Activated CD4-positive, alpha-beta T cell treated with anti-CD3 and anti-CD28 coated beads for 36 hours (primary cell): ENCODE measurements at regions of chr19 and their contacts with region 1.

Region 1: DNA sequence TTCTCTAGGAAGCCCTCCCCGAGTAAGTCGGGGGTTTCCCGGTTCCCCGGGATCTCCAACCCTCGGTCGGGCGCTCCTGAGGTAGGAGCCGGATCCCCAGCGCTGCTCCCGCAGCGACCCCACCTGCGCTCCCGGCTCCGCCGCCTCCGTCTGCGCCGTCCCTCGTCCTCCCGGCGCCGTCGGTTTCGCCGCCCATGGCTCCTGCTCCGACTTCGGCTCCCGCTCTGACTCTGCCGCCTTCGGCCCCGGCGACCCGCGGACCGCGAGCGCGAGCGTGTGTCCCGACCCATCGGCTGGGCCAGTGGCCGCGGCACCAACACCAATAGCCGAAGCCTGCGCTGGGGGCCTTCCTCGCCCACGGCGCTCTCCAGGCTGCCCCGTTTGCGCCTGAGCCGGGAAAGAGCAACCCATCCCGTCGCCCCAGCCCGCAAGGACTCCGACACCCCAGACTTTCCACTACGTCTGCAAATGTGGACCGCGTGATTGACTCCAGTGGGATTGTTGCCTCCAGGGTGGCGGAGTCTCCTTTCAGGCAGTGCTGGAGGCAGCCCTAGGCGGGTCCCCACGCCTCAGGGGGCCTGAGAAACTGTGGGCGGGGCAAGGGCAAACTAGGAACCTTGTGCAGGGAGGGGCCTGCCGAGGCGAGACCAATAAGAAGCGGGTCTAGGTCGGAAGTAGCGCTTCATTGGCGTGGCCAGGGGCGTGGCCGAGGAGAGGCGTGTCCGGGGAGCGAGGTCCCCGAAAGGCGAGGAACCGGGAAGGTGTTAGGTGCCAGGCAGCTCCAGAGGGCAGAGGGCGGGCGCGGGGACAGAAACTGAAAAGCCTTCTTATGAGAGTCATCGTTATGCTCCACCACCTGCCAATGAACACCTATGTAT is at the start of gene CACTIN:
- DNase-seq: peak; percentile 99
- ATAC-seq: peak; percentile 98
- H3K4me3 Mint-ChIP-seq: peak within 1 kb of the TSS; percentile 91
- H3K27ac Mint-ChIP-seq: peak within 1 kb of the TSS; percentile 82
- H3K4me1 Mint-ChIP-seq: peaks cover 22% of the 10 kb centered on the region
- H3K27me3 Mint-ChIP-seq: no peaks in the 10 kb centered on the region
- total RNA-seq, gene CACTIN: 28.0 to 33.6 TPM

Region 2: DNA sequence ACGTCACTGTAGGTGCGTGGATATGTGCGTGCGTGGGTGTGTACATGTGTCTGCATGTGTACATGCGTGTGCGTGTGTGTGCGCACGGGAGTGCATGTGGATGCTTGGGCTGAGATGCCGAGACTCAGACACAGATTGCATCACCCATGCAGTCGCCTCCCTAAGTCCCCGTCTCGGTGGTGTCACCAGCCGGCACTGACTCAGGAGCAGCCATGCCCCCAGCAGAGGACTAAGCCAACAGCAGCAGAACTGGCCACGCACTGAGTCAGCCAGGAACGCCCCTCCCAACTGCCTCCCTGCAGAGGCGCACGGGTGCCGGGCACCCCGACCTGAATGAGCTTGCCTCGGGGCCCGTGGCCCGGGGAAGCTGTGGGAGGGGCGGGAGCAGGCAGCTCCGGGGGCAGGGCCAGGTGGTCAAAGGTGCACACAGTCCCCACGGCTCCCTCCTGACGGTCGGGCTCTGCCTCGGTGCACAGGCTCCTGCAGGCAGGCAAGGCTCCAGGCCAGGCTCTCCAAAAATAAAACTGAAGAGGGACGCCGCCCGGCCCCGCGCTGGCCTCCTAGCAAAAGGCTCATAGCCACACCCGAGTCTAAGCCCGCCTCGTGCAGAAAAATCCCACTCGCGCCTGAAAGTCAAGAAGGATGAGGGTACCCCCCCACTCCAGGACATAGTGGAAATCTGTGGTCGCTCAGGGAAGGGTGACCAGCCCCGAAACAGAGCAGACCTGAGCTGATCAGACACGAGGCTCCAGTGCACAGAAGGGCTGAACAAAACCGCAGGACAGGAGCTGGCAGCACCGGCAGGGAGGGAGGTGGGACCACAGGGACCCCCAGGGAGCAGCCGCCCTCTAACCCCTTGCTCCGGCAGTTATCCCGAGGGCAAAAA is 1101.6 kb before region 1 on chr19:
- CTCF ChIA-PET with region 1: no interaction called
- POLR2A ChIA-PET with region 1: no interaction called
- intact Hi-C with region 1: no loop called
- DNase-seq: no peak
- ATAC-seq: no peak
- H3K4me3 Mint-ChIP-seq: no peak overlapping the region
- H3K27ac Mint-ChIP-seq: no peak overlapping the region
- H3K4me1 Mint-ChIP-seq: no peaks in the 10 kb centered on the region
- H3K27me3 Mint-ChIP-seq: no peaks in the 10 kb centered on the region

Region 3: DNA sequence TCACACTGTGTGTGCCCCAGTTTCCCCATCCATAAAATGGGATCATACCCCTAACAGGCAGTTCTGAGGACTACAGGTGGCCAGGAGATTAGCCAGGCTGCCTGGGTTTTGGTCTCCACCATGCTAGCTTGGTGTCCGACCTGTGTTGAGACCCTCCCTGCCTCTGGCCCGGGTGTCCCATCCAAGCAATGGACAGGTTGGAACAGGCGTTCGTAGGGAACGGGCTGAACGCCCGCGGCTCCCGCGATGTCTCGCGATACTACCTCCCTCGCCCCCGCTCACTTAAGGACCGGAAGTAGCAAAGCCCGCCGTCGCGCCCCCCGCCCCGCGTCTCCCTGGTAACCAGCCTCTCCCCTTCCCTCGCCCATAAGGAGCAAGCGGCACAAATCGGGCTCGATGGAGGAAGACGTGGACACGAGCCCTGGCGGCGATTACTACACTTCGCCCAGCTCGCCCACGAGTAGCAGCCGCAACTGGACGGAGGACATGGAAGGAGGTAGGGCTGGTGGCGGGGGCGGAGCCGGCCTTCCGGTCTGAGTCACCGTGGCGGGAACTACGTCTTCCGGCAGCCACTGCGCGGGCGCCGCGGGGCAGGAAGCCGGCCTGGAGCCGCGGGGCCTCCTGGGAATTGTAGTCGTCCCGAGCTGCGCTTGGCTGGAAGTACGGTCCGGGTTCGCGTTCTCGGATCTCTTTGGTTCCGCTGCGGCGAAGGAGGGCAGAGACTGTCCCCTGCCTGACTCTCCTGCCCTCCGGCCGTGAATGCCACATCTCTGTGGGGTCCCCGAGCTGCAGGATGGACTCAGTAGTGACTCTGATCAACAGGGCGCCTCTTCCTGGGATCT is 191.8 kb before region 1 on chr19:
- CTCF ChIA-PET with region 1: no interaction called
- POLR2A ChIA-PET with region 1: no interaction called
- intact Hi-C with region 1: loop called in 1 of 2 experiments (anchors 1 kb)
- DNase-seq: peak; percentile 98
- ATAC-seq: peak; percentile 96
- H3K4me3 Mint-ChIP-seq: peak overlapping the region; percentile 84
- H3K27ac Mint-ChIP-seq: peak overlapping the region; percentile 99
- H3K4me1 Mint-ChIP-seq: peaks cover 13% of the 10 kb centered on the region
- H3K27me3 Mint-ChIP-seq: no peaks in the 10 kb centered on the region

Region 4: GRCh38 chr19:3494051-3494450 is 132.7 kb before region 1 on chr19:
- CTCF ChIA-PET with region 1: no interaction called
- POLR2A ChIA-PET with region 1: no interaction called
- intact Hi-C with region 1: no loop called
- DNase-seq: peak; percentile 77
- ATAC-seq: peak; percentile 83
- H3K4me3 Mint-ChIP-seq: peak overlapping the region; percentile 10
- H3K27ac Mint-ChIP-seq: peak overlapping the region; percentile 75
- H3K4me1 Mint-ChIP-seq: peaks cover 15% of the 10 kb centered on the region
- H3K27me3 Mint-ChIP-seq: no peaks in the 10 kb centered on the region

Region 5: DNA sequence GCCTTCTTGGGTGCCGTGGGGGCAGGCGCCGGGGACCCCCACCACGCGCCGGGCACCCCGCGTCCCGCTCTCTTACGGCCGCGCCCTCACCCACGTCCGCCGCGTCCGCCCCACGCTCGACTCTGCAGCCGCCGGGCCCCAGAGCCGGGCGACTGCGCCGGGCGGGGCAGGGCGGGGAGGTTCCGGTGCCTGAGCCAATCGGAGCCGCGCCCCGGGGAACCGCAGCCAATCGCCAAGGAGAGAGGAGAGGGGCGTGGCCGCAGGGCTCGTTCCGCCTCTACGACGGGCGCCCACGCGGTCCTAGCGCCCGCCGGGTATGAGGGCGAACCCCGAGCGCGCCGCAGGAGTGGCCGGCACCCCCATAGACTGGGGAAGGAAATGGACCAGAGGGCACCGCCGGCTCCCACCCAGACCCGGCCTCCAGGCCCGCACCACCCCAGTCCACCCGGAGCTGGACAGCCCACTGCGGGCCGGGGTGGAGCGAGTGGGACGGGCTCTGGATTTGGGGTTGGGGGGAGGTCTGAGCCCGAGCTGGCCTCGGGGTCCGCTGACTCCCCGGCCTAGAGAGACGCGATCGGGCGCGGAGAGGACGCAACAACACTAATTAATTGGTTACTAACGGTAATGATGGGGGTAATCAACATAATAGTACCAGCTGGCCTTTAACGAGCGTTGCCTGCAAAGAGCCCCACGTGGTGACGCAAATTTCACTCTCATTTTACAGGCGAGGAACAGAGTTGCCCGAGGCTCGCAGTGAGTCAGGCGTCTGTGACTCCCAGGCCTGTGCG is 69.1 kb before region 1 on chr19 and contains the start of gene MFSD12:
- CTCF ChIA-PET with region 1: no interaction called
- POLR2A ChIA-PET with region 1: no interaction called
- intact Hi-C with region 1: loop called (anchors 1 kb)
- DNase-seq: peak; percentile 97
- ATAC-seq: peak; percentile 89
- H3K4me3 Mint-ChIP-seq: peak within 1 kb of the TSS; percentile 96
- H3K27ac Mint-ChIP-seq: peak within 1 kb of the TSS; percentile 92
- H3K4me1 Mint-ChIP-seq: peaks cover 36% of the 10 kb centered on the region
- H3K27me3 Mint-ChIP-seq: no peaks in the 10 kb centered on the region
- total RNA-seq, gene MFSD12: 44.7 to 46.7 TPM

Region 6: DNA sequence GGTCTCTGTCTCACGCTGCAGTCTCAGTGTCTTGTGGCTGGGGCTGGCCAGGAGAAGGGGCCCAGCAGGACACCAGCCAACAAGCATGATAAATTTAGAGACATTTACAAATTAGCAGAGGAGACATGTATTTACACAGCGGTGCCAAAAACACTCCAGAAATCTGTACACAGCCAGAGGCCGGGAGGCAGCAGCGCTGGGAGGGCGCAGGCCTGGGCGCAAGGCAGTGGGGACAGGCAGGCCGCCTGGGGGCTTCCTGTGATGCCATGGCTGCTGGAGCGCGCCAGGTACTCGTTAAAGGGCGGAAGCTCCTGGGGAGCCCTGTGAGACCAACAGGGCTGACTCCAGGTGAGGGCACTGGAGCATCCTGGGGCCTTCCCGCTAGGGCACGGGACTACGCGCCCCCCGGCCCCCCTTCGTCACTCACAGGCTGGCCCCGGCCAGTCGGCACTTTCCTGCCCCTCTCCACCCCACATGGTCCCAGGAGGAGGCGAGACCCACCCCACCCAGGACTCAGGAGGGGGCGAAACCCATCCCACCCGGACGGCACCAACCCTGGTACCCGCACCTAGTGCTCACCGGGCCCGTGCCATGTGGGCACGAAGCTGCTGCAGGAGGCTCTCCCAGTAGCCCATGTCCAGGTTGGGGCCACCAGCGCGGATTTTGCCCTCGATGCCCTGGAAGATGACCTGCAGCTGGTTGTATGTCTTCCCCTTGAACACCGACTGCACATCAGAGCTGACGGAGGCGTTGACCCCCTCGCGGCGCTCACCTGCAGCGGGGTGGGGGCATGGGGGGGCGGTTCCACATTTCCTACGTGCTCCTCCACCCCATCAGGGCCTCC is 12.7 kb before region 1 on chr19:
- CTCF ChIA-PET with region 1: no interaction called
- POLR2A ChIA-PET with region 1: no interaction called
- intact Hi-C with region 1: no loop called
- DNase-seq: no peak
- ATAC-seq: no peak
- H3K4me3 Mint-ChIP-seq: no peak overlapping the region
- H3K27ac Mint-ChIP-seq: no peak overlapping the region
- H3K4me1 Mint-ChIP-seq: peaks cover 13% of the 10 kb centered on the region
- H3K27me3 Mint-ChIP-seq: no peaks in the 10 kb centered on the region

Region 7: DNA sequence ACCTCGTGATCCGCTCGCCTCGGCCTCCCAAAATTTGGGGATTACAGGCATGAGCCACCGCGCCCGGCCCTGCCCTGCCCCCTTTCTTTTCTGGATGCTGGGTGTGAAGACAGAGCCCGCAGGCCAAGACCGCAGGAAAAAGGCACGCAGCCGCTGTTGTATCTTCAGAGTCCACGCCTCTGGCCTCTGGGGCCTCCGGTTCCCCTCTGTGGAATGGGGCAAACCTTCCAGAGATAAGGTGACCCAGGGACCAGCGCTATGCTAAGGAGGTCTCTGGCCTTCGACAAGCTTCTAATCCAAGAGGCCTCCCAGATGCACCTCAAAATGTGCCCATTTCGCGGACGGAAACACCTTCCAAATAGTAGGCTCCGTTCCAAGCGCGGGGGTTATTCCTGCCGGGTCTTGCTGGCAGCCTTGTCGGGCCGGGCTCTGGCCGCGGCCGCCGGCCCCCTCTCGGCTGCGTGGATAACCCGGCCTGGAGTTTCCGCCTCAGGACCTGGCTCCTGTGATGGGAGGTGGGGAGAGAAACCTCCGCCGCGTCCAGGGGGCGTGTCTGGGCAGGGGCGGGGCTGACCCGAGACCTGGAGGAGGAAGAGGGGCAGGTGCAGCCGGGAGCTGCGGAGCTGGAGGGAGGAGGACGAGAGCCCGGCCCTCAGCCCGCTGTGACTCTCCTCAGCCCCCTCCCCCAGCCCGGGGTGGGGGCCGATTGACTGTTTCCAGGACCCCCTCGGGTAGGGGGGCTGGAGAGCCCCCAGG is 94.6 kb after region 1 on chr19:
- CTCF ChIA-PET with region 1: interaction called, 3 read pairs
- POLR2A ChIA-PET with region 1: no interaction called
- intact Hi-C with region 1: loop called in 1 of 2 experiments (anchors 1 kb)
- DNase-seq: peak; percentile 92
- ATAC-seq: peak; percentile 94
- H3K4me3 Mint-ChIP-seq: peak overlapping the region; percentile 13
- H3K27ac Mint-ChIP-seq: no peak overlapping the region
- H3K4me1 Mint-ChIP-seq: peaks cover 10% of the 10 kb centered on the region
- H3K27me3 Mint-ChIP-seq: peaks cover 4% of the 10 kb centered on the region

Region 8: DNA sequence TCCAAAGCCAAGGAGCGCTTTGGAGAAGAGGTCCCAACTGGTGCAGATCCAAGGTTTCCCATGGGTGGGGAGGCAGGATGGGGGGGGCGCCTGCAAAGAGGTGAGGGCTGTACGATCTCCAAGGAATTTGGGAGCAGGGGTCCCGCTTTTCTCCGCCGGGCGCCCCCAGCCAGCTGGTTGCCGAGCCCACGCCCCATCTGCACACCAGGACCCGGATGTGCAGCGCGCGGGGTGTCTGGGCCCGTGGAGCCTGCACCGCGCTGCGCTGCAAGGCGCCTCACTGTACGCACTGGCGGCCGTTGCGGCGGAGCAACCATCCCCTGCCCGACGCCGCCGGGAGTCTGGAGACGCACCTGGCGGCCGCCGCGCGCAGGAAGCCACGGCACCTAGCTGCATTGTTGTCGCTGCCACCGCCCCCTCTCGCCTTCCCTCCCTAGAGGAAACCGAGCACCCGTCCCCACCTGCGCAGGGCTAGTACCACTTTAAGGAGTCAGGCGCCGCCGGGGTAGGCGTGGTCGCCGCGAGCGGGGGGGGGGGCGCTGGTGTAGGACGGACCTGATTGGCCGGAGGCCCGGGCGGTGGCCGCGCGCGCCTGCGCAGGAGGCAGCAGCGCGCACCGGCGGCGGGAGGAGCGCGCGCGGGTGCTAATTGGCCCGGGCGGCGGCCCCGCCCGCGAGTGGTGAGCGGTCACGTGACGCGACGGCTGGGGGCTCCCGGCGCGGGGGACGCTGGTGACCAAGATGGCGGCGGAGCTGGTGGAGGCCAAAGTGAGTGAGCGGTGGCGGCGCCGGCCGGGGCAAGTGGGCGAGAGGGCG is 380.5 kb after region 1 on chr19 and contains the start of gene PIAS4:
- CTCF ChIA-PET with region 1: no interaction called
- POLR2A ChIA-PET with region 1: no interaction called
- intact Hi-C with region 1: loop called in 1 of 2 experiments (anchors 1 kb)
- DNase-seq: peak; percentile 97
- ATAC-seq: peak; percentile 92
- H3K4me3 Mint-ChIP-seq: peak within 1 kb of the TSS; percentile 75
- H3K27ac Mint-ChIP-seq: peak within 1 kb of the TSS; percentile 71
- H3K4me1 Mint-ChIP-seq: peaks cover 27% of the 10 kb centered on the region
- H3K27me3 Mint-ChIP-seq: no peaks in the 10 kb centered on the region
- total RNA-seq, gene PIAS4: 23.0 to 37.3 TPM

Region 9: DNA sequence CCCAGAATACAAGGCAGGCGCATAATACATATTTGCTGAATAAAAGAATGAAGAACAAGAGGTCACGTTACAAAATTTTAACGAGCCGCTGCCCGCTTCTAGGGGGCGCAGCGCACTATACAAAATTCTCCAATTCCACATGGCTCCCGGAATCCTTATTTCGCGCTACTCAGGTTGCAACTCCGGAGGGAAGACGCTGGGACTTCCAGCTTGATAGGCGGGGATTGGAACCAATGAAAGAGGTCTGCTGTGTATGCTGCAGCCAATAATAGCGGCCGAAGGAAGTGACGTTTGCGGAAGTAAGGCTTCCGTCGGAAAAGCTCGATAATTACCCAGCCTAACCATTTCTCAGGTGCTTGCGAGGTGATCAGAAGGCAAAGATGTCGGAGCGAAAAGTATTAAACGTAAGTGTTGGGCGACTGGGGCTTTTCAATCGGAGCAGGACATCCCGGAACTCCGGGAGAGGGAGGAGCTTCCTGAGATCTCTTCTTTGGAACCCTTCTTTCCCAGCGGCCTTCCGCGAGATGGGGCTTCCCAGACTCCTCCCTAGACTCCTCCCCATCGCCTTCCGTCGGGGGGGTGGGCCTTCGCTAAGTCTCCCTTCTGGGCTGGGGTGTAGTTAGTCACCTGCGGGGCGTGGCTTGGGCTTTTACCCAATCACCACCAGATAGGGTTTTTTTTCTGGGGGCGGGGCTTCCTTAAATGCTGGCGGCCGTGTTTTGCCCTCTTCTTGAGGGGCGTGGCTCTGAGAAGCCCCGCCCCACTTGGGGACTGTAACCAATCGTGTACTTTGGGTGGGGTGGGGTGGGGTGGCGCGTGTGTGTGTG is 620.3 kb after region 1 on chr19 and contains the start of gene YJU2:
- CTCF ChIA-PET with region 1: no interaction called
- POLR2A ChIA-PET with region 1: no interaction called
- intact Hi-C with region 1: loop called in 1 of 2 experiments (anchors 1 kb)
- DNase-seq: peak; percentile 100
- ATAC-seq: peak; percentile 97
- H3K4me3 Mint-ChIP-seq: peak within 1 kb of the TSS; percentile 84
- H3K27ac Mint-ChIP-seq: peak within 1 kb of the TSS; percentile 100
- H3K4me1 Mint-ChIP-seq: peaks cover 9% of the 10 kb centered on the region
- H3K27me3 Mint-ChIP-seq: no peaks in the 10 kb centered on the region
- total RNA-seq, gene YJU2: 29.8 to 34.8 TPM

Region 10: GRCh38 chr19:4723367-4724187 is 1096.9 kb after region 1 on chr19 and contains the start of gene DPP9:
- CTCF ChIA-PET with region 1: no interaction called
- POLR2A ChIA-PET with region 1: no interaction called
- intact Hi-C with region 1: loop called in 1 of 2 experiments (anchors 5 kb)
- DNase-seq: peak; percentile 98
- ATAC-seq: peak; percentile 95
- H3K4me3 Mint-ChIP-seq: peak within 1 kb of the TSS; percentile 92
- H3K27ac Mint-ChIP-seq: peak within 1 kb of the TSS; percentile 93
- H3K4me1 Mint-ChIP-seq: peaks cover 26% of the 10 kb centered on the region
- H3K27me3 Mint-ChIP-seq: no peaks in the 10 kb centered on the region
- total RNA-seq, gene DPP9: 49.2 to 51.3 TPM